ENCODE measurements at regions of chr13 and their contacts with region 1.

Region 1: DNA sequence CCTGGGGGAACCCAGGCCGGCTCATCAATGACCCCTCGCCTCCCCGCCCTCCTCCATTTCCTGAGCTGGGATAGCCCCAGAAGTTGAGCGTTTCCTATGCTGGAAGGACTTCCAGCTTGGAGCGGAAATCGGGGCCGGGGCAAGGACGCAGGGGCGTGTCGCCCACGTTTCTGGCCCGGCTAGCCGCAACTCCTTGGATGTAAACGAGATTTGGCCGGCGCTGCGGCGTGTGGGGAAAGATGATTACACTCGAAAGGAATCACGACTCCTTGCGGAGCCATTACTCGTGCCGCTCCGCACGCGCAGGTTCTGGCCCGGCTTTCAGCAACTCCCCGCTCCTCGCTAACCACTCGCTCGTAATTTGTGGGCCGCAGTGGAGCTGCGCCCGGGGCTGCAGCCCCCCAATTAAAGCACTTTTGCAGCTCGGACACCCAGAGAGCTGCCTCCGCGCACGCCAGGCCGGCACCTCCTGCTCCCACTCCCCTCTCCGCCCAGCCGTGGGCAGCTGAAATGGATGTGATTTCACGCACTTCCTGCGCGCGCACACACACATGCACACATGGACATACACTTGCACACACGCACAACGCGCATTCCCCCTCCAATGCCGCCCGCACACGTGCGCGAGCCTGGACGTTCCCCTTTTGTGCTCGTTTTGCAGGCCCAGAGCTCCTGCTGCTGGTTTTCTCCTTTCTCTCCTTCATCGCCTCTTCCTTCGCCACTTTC is 15.7 kb downstream of the ZIC5 start:
- DNase-seq: peak in 1 of 2 experiments; percentile 72
- H3K4me3 ChIP-seq: peak overlapping the region; percentile 45 to 69 (median 60)
- H3K27ac ChIP-seq: no peak overlapping the region
- H3K4me1 ChIP-seq: peaks cover 7 to 35% (median 20%) of the 10 kb centered on the region in 4 experiments
- H3K27me3 ChIP-seq: peaks cover 12 to 58% (median 47%) of the 10 kb centered on the region in 4 experiments; a peak in 6 of 7 replicates
- CTCF ChIP-seq: no peak
- EP300 ChIP-seq: no peak
- POLR2A ChIP-seq: no peak
- RAD21 ChIP-seq: no peak

Region 2: GRCh38 chr13:99686157-99686572 is 269.7 kb before region 1 on chr13:
- CTCF ChIA-PET with region 1: interaction called, 3 read pairs
- POLR2A ChIA-PET with region 1: interaction called, 22 read pairs
- DNase-seq: peak in 1 of 2 experiments; percentile 52
- H3K4me3 ChIP-seq: peak overlapping the region in 1 of 4 experiments; percentile 28; a peak in 1 of 8 replicates
- H3K27ac ChIP-seq: peak overlapping the region; percentile 56; the same call in 1 of the 2 replicates
- H3K4me1 ChIP-seq: peaks cover 17 to 41% (median 35%) of the 10 kb centered on the region in 4 experiments
- H3K27me3 ChIP-seq: no peaks in the 10 kb centered on the region
- CTCF ChIP-seq: no peak
- EP300 ChIP-seq: no peak
- POLR2A ChIP-seq: no peak
- RAD21 ChIP-seq: no peak

Region 3: DNA sequence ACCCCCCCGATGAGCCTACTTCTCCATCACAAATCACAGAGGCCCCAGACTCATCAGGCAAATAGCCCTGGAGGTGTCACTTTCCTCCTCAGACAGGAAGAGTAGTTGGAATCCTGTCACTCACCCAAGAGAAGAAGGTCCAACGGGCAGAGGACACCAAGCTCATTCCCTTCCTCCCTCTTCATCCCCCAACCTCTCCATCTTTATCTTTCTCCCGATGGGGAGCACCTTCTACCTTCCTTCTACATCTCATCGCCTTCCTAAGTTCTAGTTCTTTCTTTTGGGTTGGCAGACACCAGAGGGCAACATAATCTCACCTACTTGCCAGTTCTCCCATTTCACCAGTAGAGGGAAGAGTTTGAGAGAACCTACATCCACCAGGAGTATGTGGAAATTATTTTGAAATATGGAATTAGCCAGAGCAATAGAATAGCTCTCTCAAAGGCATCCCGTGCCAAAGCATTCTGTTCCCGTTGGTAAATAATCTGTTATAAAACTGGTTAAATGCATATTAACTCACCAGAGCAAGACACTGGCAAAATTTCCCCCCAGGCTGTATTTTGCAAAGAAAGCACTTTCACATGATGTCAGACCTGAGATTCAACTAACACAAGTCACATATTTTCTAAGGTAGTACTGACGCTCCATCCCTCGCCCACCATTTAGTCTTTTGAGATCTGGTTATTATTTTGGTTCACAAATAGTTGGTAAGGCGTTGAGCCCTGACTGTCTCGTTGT is 39.4 kb before region 1 on chr13:
- CTCF ChIA-PET with region 1: interaction called, 93 read pairs
- POLR2A ChIA-PET with region 1: interaction called, 4 read pairs
- DNase-seq: no peak
- H3K4me3 ChIP-seq: no peak overlapping the region
- H3K27ac ChIP-seq: no peak overlapping the region
- H3K4me1 ChIP-seq: peaks cover 1 to 4% (median 2%) of the 10 kb centered on the region in 4 experiments; a peak in 5 of 7 replicates
- H3K27me3 ChIP-seq: no peaks in the 10 kb centered on the region
- CTCF ChIP-seq: peak in 2 of 3 experiments; percentile 96 to 100; a peak in 3 of 4 replicates
- EP300 ChIP-seq: no peak
- POLR2A ChIP-seq: no peak
- RAD21 ChIP-seq: peak; percentile 80 to 86

Region 4: DNA sequence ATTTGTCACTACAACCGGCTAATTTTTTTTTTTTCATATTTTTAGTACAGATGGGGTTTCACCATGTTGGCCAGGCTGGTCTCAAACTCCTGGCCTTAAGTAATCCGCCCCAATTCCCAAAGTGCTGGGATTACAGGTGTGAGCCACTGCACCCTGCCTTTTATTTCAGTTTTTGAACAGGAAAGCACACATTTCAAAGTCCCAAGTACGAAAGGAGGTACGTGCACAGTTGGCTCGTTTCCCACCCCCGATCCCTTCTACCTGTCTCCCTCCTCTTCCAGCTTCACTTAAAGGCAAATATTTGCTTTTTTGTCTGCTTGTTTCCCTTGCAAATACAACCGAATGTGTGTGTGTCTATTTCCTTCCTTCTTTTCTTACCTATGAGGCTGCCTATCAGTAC is 14.8 kb before region 1 on chr13:
- CTCF ChIA-PET with region 1: interaction called, 23 read pairs
- POLR2A ChIA-PET with region 1: interaction called, 5 read pairs
- DNase-seq: no peak
- H3K4me3 ChIP-seq: no peak overlapping the region
- H3K27ac ChIP-seq: no peak overlapping the region
- H3K4me1 ChIP-seq: peaks cover 0 to 4% (median 0%) of the 10 kb centered on the region in 4 experiments; a peak in 2 of 7 replicates
- H3K27me3 ChIP-seq: no peaks in the 10 kb centered on the region
- CTCF ChIP-seq: no peak
- EP300 ChIP-seq: no peak
- POLR2A ChIP-seq: no peak
- RAD21 ChIP-seq: no peak

Region 5: GRCh38 chr13:99980201-99980823 is 24.4 kb after region 1 on chr13:
- CTCF ChIA-PET with region 1: interaction called, 10 read pairs
- POLR2A ChIA-PET with region 1: interaction called, 80 read pairs
- DNase-seq: no peak
- H3K4me3 ChIP-seq: peak overlapping the region; percentile 73 to 96 (median 94)
- H3K27ac ChIP-seq: peak overlapping the region; percentile 94
- H3K4me1 ChIP-seq: peaks cover 0 to 20% (median 15%) of the 10 kb centered on the region in 4 experiments; a peak in 6 of 7 replicates
- H3K27me3 ChIP-seq: peaks cover 0 to 16% (median 4%) of the 10 kb centered on the region in 4 experiments; a peak in 4 of 7 replicates
- CTCF ChIP-seq: peak in 1 of 3 experiments; percentile 4; a peak in 1 of 4 replicates
- EP300 ChIP-seq: no peak
- POLR2A ChIP-seq: no peak; a peak in 2 of 3 replicates
- RAD21 ChIP-seq: peak in 1 of 2 experiments; percentile 28; a peak in 1 of 4 replicates

Measured in H1 (cell line).